ENCODE measurements at regions of chr10 and their contacts with region 1.

Region 1: GRCh38 chr10:28915989-28916588 is 238.8 kb downstream of the BAMBI start:
- DNase-seq: no peak
- H3K4me3 ChIP-seq: no peak overlapping the region
- H3K27ac ChIP-seq: no peak overlapping the region
- H3K4me1 ChIP-seq: peaks cover 0 to 18% (median 6%) of the 10 kb centered on the region in 4 donors
- H3K27me3 ChIP-seq: no peaks in the 10 kb centered on the region
- CTCF ChIP-seq: no peak

Region 2: DNA sequence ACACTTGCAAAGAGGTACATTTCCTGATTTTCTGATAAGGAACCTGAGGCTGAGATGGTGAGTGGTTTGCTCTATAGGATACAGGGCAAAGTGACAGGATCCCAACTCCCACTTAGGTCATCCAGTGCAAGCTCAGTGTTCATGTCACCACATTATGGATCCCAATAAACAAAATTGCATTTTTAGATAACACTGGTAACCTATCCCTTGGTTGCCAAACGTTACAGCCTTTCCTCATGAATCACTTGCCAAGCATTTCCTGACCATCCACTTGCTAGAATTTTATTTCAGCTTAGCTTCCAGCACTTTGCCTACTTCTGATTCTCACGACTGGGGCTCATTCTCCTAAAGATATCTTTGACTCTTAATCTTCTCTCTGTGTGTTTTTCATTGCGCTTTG is 785.8 kb before region 1 on chr10:
- intact Hi-C with region 1: no loop called
- DNase-seq: no peak
- H3K4me3 ChIP-seq: no peak overlapping the region
- H3K27ac ChIP-seq: no peak overlapping the region
- H3K4me1 ChIP-seq: peaks cover 0 to 21% (median 6%) of the 10 kb centered on the region in 4 donors
- H3K27me3 ChIP-seq: no peaks in the 10 kb centered on the region
- CTCF ChIP-seq: no peak

Region 3: GRCh38 chr10:28822719-28823464 is 93.2 kb before region 1 on chr10:
- intact Hi-C with region 1: no loop called
- DNase-seq: no peak
- H3K4me3 ChIP-seq: no peak overlapping the region
- H3K27ac ChIP-seq: no peak overlapping the region
- H3K4me1 ChIP-seq: no peaks in the 10 kb centered on the region
- H3K27me3 ChIP-seq: no peaks in the 10 kb centered on the region
- CTCF ChIP-seq: no peak

Region 4: GRCh38 chr10:28952523-28952922 is 36.4 kb after region 1 on chr10:
- intact Hi-C with region 1: loop called (anchors 2 kb)
- DNase-seq: no peak
- H3K4me3 ChIP-seq: no peak overlapping the region
- H3K27ac ChIP-seq: no peak overlapping the region
- H3K4me1 ChIP-seq: no peaks in the 10 kb centered on the region
- H3K27me3 ChIP-seq: no peaks in the 10 kb centered on the region
- CTCF ChIP-seq: no peak

Region 5: DNA sequence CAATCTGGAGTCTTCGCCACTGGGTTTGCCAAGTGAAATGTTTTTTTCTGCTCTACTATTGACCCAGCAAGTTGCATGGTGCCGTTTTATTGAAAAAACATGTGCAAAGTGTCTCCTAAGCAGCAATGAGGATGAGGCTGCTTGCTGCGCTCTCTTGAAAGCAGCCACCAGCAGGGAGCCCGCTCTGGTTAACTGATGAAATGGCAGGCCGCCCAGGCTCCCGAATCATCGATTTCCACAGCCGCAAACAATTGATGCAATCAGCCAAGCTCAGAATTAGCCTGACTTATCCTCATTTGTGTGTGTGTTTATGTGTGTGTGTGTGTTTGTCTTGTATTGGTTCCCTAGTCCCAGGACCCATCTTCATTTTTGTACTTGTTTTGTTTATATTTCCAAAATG is 350.6 kb after region 1 on chr10:
- intact Hi-C with region 1: no loop called
- DNase-seq: no peak
- H3K4me3 ChIP-seq: no peak overlapping the region
- H3K27ac ChIP-seq: no peak overlapping the region
- H3K4me1 ChIP-seq: no peaks in the 10 kb centered on the region
- H3K27me3 ChIP-seq: no peaks in the 10 kb centered on the region
- CTCF ChIP-seq: no peak

Measured in tibial artery (tissue), 4 donors.